ENCODE measurements at regions of chr6 and their contacts with region 1.

Region 1: DNA sequence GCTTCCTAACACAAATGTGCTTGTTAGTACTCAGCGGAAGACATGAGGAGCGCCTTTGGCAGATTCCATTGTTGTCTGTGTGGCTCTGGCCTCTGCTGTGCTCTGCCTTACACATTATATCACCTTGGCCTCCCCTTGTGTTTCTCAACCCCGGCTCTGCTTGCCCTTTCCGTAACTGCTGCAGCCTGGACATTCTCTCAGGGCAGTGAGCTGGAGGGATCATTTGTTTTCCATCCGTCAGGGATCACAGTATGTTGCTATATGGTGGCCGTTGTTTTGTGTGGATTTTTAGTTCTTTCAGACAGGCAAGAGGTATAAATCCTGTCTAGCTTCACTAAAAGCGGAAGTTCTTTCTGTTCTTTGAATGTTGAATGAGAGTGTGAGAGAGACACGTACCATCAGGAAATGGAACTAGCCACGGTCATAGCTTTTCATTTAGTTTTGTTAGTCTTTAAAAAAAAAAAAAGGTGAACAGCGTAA is 175.1 kb downstream of the JARID2 start:
- DNase-seq: no peak
- H3K4me3 Mint-ChIP-seq: peak overlapping the region; percentile 47
- H3K27ac Mint-ChIP-seq: peak overlapping the region; percentile 82
- H3K4me1 Mint-ChIP-seq: peaks cover 54% of the 10 kb centered on the region
- H3K27me3 Mint-ChIP-seq: no peaks in the 10 kb centered on the region

Region 2: DNA sequence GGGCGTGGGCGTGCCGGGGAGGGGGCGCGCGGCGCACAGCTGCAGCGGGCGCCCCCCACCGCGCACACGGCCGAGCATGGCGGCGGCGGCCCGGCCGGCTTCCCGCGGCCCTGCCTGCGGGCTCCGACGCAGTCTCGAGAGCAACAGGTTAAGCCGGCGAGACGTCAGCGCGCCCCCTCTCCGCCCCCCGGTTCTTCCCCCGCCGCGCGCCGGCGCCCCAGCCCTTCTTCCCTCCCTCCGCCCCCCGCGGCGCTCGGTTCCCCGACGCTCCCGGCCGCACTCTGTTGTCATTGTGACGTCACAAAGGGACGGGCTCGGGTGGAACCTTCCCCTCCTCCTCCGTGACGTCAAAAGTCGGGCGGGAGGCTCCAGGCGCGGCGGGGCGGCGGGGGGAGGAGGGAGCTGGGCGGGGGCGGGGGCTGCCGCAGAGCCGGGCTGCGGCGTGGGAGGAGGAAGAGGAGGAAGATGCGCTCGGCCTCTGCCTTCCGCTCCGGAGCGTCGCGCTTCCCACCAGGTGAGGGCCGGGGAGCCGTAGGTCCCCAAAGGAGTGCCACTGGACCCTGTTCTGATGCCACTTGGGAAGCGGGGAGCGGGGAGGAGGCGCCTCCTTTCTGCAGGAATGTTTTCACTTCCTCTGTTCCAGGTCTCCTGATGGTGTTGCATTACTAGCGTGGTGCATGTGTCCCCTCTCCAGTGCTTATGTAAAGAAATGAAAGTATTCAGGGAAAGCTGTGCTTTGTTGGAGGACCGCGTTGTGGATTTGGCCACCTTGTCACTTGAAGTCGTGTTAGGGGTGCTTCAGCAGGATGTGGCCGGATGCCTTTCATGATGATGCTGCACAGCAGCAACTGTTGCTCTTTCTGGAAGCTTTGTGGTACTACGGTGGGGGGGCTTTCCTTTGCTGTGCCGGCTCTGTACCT is 172.3 kb before region 1 on chr6:
- CTCF ChIA-PET with region 1: interaction called, 3 read pairs
- POLR2A ChIA-PET with region 1: interaction called, 14 read pairs
- DNase-seq: peak; percentile 97
- H3K4me3 Mint-ChIP-seq: peak overlapping the region; percentile 99
- H3K27ac Mint-ChIP-seq: peak overlapping the region; percentile 100
- H3K4me1 Mint-ChIP-seq: peaks cover 52% of the 10 kb centered on the region
- H3K27me3 Mint-ChIP-seq: no peaks in the 10 kb centered on the region

Region 3: DNA sequence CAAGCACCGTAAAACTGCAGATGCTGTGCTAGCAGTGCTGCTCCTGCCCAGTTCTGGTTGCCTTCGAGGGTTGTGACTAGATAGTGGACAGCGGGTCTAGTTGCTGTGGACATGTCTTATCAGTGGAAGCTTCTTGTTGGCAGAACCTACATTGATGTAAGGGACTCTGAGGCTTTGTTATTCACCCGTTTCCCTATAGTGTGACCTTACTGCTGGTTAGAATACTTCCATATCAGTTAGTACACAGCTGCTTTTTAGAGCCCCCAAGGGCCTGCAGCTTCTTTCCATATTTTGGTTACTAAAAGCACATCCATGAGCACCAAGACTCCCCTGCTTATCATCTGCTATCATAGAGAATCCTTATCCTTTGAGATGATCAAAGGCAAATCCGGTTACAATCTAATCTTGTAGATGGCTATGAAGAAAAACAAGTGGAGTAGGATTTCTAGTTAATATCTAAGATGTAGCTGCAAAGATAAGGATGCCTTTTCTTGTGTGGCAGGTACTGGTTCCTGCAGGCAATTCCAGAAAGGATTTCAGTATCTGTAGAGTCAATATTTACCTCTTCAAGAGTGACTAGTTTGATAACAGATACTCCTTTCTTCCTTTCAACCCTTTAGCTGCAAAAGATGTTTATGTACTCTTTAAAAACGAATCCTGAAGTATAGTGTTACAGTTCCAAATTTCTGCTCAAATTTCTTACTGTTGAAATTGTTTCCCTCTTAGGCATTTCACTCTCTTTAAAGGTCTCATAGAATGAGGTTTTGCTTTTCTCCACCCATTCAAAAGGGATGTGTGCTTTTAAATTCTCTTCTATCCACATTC is 11.5 kb before region 1 on chr6:
- CTCF ChIA-PET with region 1: interaction called, 16 read pairs
- POLR2A ChIA-PET with region 1: interaction called, 11 read pairs
- DNase-seq: no peak
- H3K4me3 Mint-ChIP-seq: no peak overlapping the region
- H3K27ac Mint-ChIP-seq: peak overlapping the region; percentile 82
- H3K4me1 Mint-ChIP-seq: peaks cover 73% of the 10 kb centered on the region
- H3K27me3 Mint-ChIP-seq: no peaks in the 10 kb centered on the region

Region 4: DNA sequence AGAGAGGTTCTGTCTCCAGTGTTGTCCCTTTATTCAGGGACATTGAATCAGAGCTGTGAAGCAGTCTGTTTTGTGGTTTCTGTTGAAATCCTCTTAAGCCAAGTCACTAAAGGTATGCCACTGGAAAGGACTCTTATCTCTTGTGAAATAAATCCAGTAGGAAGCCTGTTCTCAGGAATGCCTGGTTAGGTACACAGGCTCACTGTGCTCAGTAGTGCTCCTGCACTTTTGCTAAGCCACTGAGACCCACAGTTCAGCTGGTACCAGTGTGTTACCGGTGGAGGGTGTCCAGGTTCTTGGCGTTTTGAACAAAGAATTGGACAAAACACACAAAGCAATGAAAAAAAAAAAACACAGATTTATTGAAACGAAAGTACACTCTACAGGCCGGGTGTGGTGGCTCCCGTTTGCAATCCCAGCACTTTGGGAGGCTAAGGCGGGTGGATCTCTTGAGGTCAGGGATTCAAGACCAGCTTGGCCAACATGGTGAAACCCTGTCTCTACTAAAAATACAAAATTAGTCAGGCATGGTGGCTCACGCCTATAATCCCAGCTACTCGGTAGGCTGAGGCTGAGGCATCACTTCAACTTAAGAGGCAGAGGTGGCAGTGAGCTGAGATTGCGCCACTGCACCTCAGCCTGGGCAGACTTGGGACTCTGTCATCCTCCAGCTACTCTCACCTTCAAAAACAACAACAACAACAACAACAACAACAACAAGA is 10.9 kb after region 1 on chr6:
- CTCF ChIA-PET with region 1: interaction called, 6 read pairs
- POLR2A ChIA-PET with region 1: interaction called, 16 read pairs
- DNase-seq: no peak
- H3K4me3 Mint-ChIP-seq: no peak overlapping the region
- H3K27ac Mint-ChIP-seq: no peak overlapping the region
- H3K4me1 Mint-ChIP-seq: peaks cover 73% of the 10 kb centered on the region
- H3K27me3 Mint-ChIP-seq: no peaks in the 10 kb centered on the region

Region 5: GRCh38 chr6:15441215-15441868 is 20.3 kb after region 1 on chr6:
- CTCF ChIA-PET with region 1: interaction called, 15 read pairs
- POLR2A ChIA-PET with region 1: interaction called, 4 read pairs
- DNase-seq: peak; percentile 44
- H3K4me3 Mint-ChIP-seq: no peak overlapping the region
- H3K27ac Mint-ChIP-seq: peak overlapping the region; percentile 1
- H3K4me1 Mint-ChIP-seq: peaks cover 65% of the 10 kb centered on the region
- H3K27me3 Mint-ChIP-seq: no peaks in the 10 kb centered on the region

Measured in activated CD4-positive, alpha-beta memory T cell treated with anti-CD3 and anti-CD28 coated beads, Interleukin-2, amount 10 ng/mL, durations not matched to agents 7 days and 5 days (primary cell).